HEK293 (cell line): ENCODE measurements at regions of chr17 and their contacts with region 1.

Region 1: GRCh38 chr17:76264755-76265596 is at the start of gene UBALD2:
- H3K4me3 ChIP-seq: peak within 1 kb of the TSS; percentile 89
- H3K27ac ChIP-seq: peak within 1 kb of the TSS; percentile 81
- H3K4me1 ChIP-seq: no peaks in the 10 kb centered on the region; the same call in 1 of the 2 replicates
- CTCF ChIP-seq: no peak

Region 2: GRCh38 chr17:76240461-76241203 is 24.3 kb before region 1 on chr17 and contains the start of gene RNF157:
- CTCF ChIA-PET with region 1: no interaction called
- POLR2A ChIA-PET with region 1: interaction called, 17 read pairs
- H3K4me3 ChIP-seq: peak within 1 kb of the TSS; percentile 33
- H3K27ac ChIP-seq: peak within 1 kb of the TSS; percentile 21; the same call in 1 of the 2 replicates
- H3K4me1 ChIP-seq: peaks cover 7% of the 10 kb centered on the region
- CTCF ChIP-seq: no peak

Region 3: DNA sequence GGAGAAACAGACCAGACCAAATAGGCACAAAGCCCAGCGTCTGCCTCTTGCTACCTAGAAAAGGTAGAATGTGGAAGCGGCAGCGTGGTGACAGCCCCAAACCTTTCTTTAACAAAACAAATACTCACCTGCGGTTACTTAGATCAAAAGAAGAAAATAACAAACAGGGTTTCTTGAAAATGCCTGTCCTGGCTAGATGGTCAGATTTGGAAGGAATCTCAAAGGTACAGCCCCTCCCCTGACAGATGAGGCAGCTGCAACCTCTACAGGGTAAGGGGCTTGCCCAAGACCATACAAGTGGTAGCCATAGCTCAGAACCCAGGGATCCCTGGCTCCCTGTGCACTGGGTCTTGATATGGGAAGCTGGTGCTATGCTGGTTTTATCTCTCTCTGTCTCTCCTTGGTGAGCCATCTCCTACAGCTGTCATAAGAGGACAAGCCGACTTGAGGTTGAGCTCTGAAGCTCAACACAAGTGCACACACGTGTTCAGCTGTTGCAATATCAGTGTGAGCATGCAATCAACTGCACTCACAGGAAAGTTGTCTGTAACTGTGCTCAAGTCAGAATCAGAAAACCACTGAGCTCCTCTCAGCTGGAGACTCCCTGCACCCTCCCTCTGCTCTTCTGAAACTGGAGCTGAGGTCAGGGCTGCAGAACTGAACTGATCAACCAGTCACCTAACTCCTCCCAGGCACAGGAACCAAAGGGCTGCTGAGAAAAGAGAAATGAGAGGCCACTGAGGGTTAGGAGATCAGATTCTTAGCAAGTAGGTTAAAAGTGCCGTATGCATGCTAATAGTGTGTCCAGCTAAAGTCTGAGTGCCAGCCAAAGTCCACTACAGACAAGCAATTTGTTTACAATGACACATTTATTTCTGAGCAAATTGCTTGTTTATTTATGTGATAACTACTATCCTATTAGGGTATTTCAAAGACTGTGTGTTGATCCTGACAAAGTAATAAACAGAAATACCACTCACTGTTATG is 18.6 kb before region 1 on chr17:
- CTCF ChIA-PET with region 1: interaction called, 4 read pairs
- POLR2A ChIA-PET with region 1: interaction called, 17 read pairs
- H3K4me3 ChIP-seq: no peak overlapping the region
- H3K27ac ChIP-seq: no peak overlapping the region
- H3K4me1 ChIP-seq: peaks cover 4% of the 10 kb centered on the region; the same call in 1 of the 2 replicates
- CTCF ChIP-seq: no peak